ENCODE measurements at regions of chr15 and their contacts with region 1.

Region 1: DNA sequence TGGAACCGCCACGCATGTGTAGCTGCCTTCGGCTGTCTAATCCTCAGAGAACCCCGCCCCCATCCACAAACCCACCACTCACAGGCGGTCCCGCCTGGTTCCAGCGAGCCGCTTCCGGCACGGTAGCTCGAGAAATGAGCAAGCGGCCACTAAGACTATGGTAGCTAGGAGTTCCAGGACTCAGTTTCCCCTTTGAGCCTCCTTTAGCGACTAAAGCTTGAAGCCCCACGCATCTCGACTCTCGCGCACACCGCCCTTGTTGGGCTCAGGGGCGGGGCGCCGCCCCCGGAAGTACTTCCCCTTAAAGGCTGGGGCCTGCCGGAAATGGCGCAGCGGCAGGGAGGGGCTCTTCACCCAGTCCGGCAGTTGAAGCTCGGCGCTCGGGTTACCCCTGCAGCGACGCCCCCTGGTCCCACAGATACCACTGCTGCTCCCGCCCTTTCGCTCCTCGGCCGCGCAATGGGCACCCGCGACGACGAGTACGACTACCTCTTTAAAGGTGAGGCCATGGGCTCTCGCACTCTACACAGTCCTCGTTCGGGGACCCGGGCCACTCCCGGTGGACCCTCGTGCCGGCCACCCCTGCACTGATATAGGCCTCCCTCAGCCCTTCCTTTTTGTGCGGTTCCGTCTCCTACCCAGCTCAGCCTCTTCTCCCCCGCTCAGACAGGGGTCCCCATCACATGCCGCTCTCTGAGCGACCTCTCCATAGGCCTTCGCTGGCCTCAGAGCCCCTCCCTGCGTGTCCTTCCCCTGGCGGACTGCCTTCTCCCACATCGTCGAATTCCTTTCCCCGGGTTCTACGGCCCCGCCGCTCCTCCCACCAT is at the start of gene RAB11A:
- DNase-seq: peak; percentile 97
- H3K4me3 Mint-ChIP-seq: peak within 1 kb of the TSS; percentile 96
- H3K27ac Mint-ChIP-seq: peak within 1 kb of the TSS; percentile 96
- H3K4me1 Mint-ChIP-seq: peaks cover 26% of the 10 kb centered on the region
- H3K27me3 Mint-ChIP-seq: peaks cover 4% of the 10 kb centered on the region
- total RNA-seq, gene RAB11A: 171 to 181 TPM

Region 2: DNA sequence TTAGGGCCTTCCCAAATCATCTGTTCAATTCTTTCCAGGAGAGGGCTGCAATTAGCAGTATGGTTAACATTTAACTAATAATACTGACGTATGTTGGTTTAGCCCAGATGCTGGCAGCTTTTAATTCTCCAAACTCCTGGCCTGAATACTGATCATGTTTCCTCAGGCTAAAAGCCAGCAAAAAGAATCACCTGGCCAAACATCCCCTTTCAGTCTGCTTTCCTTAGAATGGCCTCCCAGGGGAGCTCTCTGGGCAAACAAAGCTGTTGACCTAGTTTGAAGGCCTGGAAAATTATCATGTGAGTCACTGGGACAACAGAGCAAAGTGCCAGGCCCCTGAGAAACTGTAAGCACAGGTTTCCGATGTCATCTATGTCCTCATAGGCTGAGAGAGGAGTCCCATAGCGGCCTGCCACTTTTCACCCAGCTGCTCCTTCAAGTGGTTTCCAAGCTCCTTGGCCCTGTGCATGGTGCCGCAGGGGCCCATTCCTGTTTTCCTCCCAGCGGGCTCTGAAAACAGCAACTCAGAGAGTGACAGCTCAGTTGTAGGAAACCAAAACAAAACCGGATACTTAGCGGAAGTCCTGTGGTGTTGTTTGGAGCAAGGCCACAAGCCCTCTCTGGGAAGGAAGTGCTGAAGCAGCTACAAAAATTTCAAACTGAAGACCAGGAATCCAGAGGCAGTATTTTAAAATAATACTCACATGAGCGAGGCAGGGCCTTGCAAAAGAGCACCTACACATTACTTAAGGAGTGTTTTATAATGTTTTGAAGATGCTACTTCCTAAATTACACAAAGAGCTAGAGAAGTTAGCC is 36.6 kb before region 1 on chr15:
- CTCF ChIA-PET with region 1: interaction called, 11 read pairs
- POLR2A ChIA-PET with region 1: interaction called, 4 read pairs
- intact Hi-C with region 1: loop called (anchors 5 kb)
- DNase-seq: peak; percentile 72
- H3K4me3 Mint-ChIP-seq: peak overlapping the region; percentile 68
- H3K27ac Mint-ChIP-seq: peak overlapping the region; percentile 94
- H3K4me1 Mint-ChIP-seq: peaks cover 45% of the 10 kb centered on the region
- H3K27me3 Mint-ChIP-seq: no peaks in the 10 kb centered on the region

Region 3: DNA sequence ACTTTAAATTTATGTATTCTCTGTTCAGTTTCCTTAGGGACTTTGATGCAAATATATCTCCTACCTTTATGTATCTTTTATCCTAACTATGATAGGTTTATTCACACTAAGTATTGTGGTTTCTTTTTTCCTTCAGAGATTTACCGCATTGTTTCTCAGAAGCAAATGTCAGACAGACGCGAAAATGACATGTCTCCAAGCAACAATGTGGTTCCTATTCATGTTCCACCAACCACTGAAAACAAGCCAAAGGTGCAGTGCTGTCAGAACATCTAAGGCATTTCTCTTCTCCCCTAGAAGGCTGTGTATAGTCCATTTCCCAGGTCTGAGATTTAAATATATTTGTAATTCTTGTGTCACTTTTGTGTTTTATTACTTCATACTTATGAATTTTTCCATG is 18.2 kb after region 1 on chr15:
- CTCF ChIA-PET with region 1: interaction called, 4 read pairs
- POLR2A ChIA-PET with region 1: interaction called, 10 read pairs
- intact Hi-C with region 1: loop called (anchors 1 kb)
- DNase-seq: peak; percentile 58
- H3K4me3 Mint-ChIP-seq: no peak overlapping the region
- H3K27ac Mint-ChIP-seq: peak overlapping the region; percentile 66
- H3K4me1 Mint-ChIP-seq: peaks cover 78% of the 10 kb centered on the region
- H3K27me3 Mint-ChIP-seq: no peaks in the 10 kb centered on the region

Region 4: GRCh38 chr15:65939901-65940617 is 70.7 kb after region 1 on chr15:
- CTCF ChIA-PET with region 1: no interaction called
- POLR2A ChIA-PET with region 1: no interaction called
- intact Hi-C with region 1: no loop called
- DNase-seq: no peak
- H3K4me3 Mint-ChIP-seq: no peak overlapping the region
- H3K27ac Mint-ChIP-seq: no peak overlapping the region
- H3K4me1 Mint-ChIP-seq: peaks cover 6% of the 10 kb centered on the region
- H3K27me3 Mint-ChIP-seq: no peaks in the 10 kb centered on the region

Region 5: GRCh38 chr15:66293419-66294156 is 424.2 kb after region 1 on chr15 and contains the start of gene DIS3L:
- CTCF ChIA-PET with region 1: interaction called, 3 read pairs
- POLR2A ChIA-PET with region 1: interaction called, 7 read pairs
- intact Hi-C with region 1: loop called (anchors 5 kb)
- DNase-seq: peak; percentile 68
- H3K4me3 Mint-ChIP-seq: peak within 1 kb of the TSS; percentile 84
- H3K27ac Mint-ChIP-seq: peak within 1 kb of the TSS; percentile 89
- H3K4me1 Mint-ChIP-seq: peaks cover 39% of the 10 kb centered on the region
- H3K27me3 Mint-ChIP-seq: no peaks in the 10 kb centered on the region
- total RNA-seq, gene DIS3L: 23.5 to 26.3 TPM

Measured in activated CD4-positive, alpha-beta memory T cell treated with anti-CD3 and anti-CD28 coated beads for 36 hours (primary cell).